ENCODE measurements at regions of chr4 and their contacts with region 1.

Region 1: GRCh38 chr4:87973283-87974169 is 2.0 kb upstream of the SPP1 start:
- DNase-seq: peak in 16 of 35 experiments; percentile 6 to 49 (median 18)
- ATAC-seq: peak; percentile 64 to 72 (median 70)
- H3K4me3 ChIP-seq: no peak overlapping the region
- H3K4me3 Mint-ChIP-seq: no peak overlapping the region
- H3K27ac ChIP-seq: no peak overlapping the region
- H3K27ac Mint-ChIP-seq: no peak overlapping the region
- H3K4me1 ChIP-seq: peaks cover 4 to 6% of the 10 kb centered on the region in 2 experiments
- H3K4me1 Mint-ChIP-seq: peaks cover 6 to 14% (median 7%) of the 10 kb centered on the region in 3 donors
- H3K27me3 ChIP-seq: peaks cover 0 to 7% of the 10 kb centered on the region in 2 experiments
- H3K27me3 Mint-ChIP-seq: peaks cover 34 to 41% of the 10 kb centered on the region in 2 donors

Region 2: GRCh38 chr4:87707279-87707918 is 266.1 kb before region 1 on chr4:
- CTCF ChIA-PET with region 1: no interaction called
- POLR2A ChIA-PET with region 1: no interaction called
- DNase-seq: no peak
- ATAC-seq: no peak
- H3K4me3 ChIP-seq: no peak overlapping the region
- H3K4me3 Mint-ChIP-seq: no peak overlapping the region
- H3K27ac ChIP-seq: no peak overlapping the region
- H3K27ac Mint-ChIP-seq: no peak overlapping the region
- H3K4me1 ChIP-seq: no peaks in the 10 kb centered on the region
- H3K4me1 Mint-ChIP-seq: no peaks in the 10 kb centered on the region
- H3K27me3 ChIP-seq: peaks cover 0 to 9% of the 10 kb centered on the region in 2 experiments
- H3K27me3 Mint-ChIP-seq: peaks cover 15 to 39% of the 10 kb centered on the region in 2 donors

Region 3: DNA sequence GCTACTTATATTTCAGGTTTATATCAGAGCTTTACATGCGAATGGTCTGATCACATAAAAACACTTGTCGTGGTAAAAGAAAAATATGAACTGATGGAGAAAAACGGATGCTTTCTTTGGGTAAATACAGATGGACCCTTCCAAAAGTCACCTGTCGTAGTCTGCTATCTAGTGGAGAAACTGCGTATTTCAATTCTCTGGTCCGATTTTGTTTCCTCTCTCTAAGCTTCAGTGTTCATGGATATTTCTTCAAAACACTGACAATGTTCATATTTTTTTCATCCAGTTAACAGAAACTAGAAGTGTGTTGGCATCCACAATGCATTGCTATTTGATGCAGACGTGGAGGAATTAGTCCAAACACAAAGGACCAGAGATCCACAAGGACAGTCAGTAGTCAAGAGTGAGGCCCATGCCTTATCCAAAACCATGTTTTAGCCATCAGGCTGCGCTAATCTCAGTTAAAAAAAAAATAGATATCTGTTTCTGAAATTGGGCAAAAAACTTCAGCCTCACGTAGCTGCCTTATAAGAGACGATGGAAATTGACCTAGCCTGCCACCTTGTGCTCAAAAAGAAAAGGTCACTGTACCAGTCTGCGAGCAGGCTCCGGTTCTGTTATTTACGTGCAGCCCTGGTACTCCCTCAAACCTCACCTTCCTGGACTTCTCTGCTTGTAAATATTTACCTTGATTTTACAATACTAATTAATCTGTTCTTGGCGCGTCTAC is 124.7 kb before region 1 on chr4:
- CTCF ChIA-PET with region 1: interaction called in 1 of 2 experiments, 15 read pairs
- POLR2A ChIA-PET with region 1: no interaction called
- DNase-seq: peak in 24 of 35 experiments; percentile 1 to 57 (median 12)
- ATAC-seq: peak; percentile 65 to 90 (median 87)
- H3K4me3 ChIP-seq: peak overlapping the region in 1 of 2 donors; percentile 23
- H3K4me3 Mint-ChIP-seq: peak overlapping the region; percentile 3 to 48 (median 25)
- H3K27ac ChIP-seq: no peak overlapping the region
- H3K27ac Mint-ChIP-seq: no peak overlapping the region
- H3K4me1 ChIP-seq: peaks cover 2 to 15% of the 10 kb centered on the region in 2 experiments
- H3K4me1 Mint-ChIP-seq: peaks cover 8 to 17% (median 13%) of the 10 kb centered on the region in 3 donors
- H3K27me3 ChIP-seq: no peaks in the 10 kb centered on the region
- H3K27me3 Mint-ChIP-seq: peaks cover 17 to 18% of the 10 kb centered on the region in 2 donors

Region 4: GRCh38 chr4:87985097-87985886 is 11.8 kb after region 1 on chr4:
- CTCF ChIA-PET with region 1: interaction called, 4 to 10 read pairs
- POLR2A ChIA-PET with region 1: no interaction called
- DNase-seq: peak in 9 of 35 experiments; percentile 8 to 41 (median 17)
- ATAC-seq: peak; percentile 63 to 85 (median 78)
- H3K4me3 ChIP-seq: no peak overlapping the region
- H3K4me3 Mint-ChIP-seq: no peak overlapping the region
- H3K27ac ChIP-seq: no peak overlapping the region
- H3K27ac Mint-ChIP-seq: no peak overlapping the region
- H3K4me1 ChIP-seq: peaks cover 0 to 2% of the 10 kb centered on the region in 2 experiments
- H3K4me1 Mint-ChIP-seq: peaks cover 0 to 2% (median 0%) of the 10 kb centered on the region in 3 donors
- H3K27me3 ChIP-seq: peaks cover 0 to 10% of the 10 kb centered on the region in 2 experiments
- H3K27me3 Mint-ChIP-seq: peaks cover 10 to 23% of the 10 kb centered on the region in 2 donors

Measured in T-cell (primary cell).